Prostate gland (tissue), 2 donors: ENCODE measurements at regions of chr10 and their contacts with region 1.

Region 1: GRCh38 chr10:52644373-52645186 is 128.0 kb downstream of the MBL2 start:
- DNase-seq: peak; percentile 35
- H3K4me3 ChIP-seq: no peak overlapping the region
- H3K27ac ChIP-seq: no peak overlapping the region
- H3K4me1 ChIP-seq: no peaks in the 10 kb centered on the region
- H3K27me3 ChIP-seq: no peaks in the 10 kb centered on the region
- CTCF ChIP-seq: peak; percentile 38 to 85 (median 74)
- POLR2A ChIP-seq: no peak

Region 2: DNA sequence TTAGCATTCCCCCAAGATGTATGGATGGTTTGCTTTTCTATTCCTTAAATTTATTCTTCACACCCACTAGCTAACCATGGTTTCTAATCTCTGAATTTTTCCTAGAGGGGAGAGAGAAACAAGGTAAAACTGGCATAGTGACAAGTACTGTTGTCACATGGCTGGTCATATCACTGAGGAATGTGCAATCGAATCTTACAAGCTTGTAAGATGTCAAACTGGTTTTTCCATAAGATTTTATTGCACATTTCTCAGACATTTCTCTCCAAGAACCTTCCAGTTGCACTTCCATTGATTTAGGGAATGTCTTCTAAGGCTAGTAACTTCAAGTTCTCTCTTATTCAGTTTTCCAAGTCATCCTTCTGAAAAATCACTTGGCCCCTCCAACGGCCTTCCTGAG is 38.2 kb after region 1 on chr10:
- intact Hi-C with region 1: no loop called
- DNase-seq: peak; percentile 14
- H3K4me3 ChIP-seq: no peak overlapping the region
- H3K27ac ChIP-seq: no peak overlapping the region
- H3K4me1 ChIP-seq: no peaks in the 10 kb centered on the region
- H3K27me3 ChIP-seq: no peaks in the 10 kb centered on the region
- CTCF ChIP-seq: no peak
- POLR2A ChIP-seq: no peak

Region 3: GRCh38 chr10:52729271-52730104 is 84.9 kb after region 1 on chr10:
- intact Hi-C with region 1: loop called (anchors 10 kb)
- DNase-seq: no peak
- H3K4me3 ChIP-seq: no peak overlapping the region
- H3K27ac ChIP-seq: no peak overlapping the region
- H3K4me1 ChIP-seq: no peaks in the 10 kb centered on the region
- H3K27me3 ChIP-seq: no peaks in the 10 kb centered on the region
- CTCF ChIP-seq: peak in 3 of 4 experiments; percentile 49 to 62 (median 61)
- POLR2A ChIP-seq: no peak

Region 4: DNA sequence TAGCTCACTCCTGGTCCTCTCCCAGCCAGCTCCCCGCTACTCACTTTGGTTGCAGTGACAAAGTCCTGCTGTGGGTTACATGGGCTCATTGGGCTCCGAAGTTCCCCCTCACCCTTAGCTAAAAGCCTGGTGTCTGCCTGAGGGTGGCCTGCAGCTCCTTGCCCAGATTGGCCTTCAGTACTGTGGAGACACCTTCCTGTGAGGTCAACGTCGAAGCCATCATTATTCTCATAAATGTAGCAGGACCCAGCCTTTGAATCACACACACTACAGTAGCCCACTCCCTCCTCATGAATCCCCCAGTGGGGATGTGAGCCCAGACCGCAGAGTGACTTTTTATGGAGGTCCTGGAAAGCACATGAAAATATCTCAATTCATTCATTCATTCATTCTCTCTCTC is 117.5 kb after region 1 on chr10:
- intact Hi-C with region 1: no loop called
- DNase-seq: no peak
- H3K4me3 ChIP-seq: no peak overlapping the region
- H3K27ac ChIP-seq: no peak overlapping the region
- H3K4me1 ChIP-seq: no peaks in the 10 kb centered on the region
- H3K27me3 ChIP-seq: no peaks in the 10 kb centered on the region
- CTCF ChIP-seq: no peak
- POLR2A ChIP-seq: no peak

Region 5: DNA sequence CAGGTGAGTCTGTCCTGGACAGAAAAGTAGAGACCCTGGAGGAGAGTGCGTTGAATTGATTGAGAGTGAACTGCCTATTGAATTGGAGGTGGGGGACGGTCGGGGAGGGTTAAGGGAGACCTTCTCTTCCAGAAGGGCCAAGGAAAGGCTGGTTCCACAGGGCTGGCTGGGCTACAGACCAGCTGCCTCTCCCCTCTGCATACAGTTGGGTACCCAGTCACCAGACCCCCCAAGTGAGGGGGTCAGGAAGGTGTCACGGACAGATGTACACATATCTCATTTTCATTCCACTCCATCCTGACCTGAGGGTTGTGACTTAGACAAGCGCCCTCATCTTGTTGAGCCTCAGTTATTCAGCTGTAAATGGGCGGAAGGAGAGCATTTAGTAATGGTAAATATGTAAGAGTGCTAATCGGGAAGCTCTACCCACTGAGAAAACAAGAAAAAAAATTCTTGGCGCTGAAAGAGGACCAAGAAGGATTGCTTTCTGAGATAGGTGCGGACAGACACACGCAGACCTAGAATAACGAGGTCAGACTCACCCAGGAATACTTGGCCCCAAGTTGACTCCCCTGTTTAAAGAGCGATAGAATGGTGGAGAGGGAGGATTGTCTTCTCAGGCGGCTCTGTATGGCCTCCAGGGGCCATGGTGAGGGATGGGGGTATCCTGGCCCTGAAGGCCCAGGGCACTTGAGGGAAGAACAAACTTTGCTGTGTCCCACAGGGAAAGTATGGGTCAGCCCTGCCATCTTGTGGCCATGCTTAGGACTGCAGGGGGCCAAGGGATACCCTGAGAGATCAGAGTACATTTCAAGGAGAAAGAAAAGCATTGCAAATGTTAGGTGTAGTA is 135.2 kb after region 1 on chr10:
- intact Hi-C with region 1: loop called (anchors 10 kb)
- DNase-seq: no peak
- H3K4me3 ChIP-seq: no peak overlapping the region
- H3K27ac ChIP-seq: no peak overlapping the region
- H3K4me1 ChIP-seq: no peaks in the 10 kb centered on the region
- H3K27me3 ChIP-seq: no peaks in the 10 kb centered on the region
- CTCF ChIP-seq: peak in 3 of 4 experiments; percentile 49 to 69 (median 53)
- POLR2A ChIP-seq: no peak